ENCODE measurements at regions of chr5 and their contacts with region 1.

Region 1: DNA sequence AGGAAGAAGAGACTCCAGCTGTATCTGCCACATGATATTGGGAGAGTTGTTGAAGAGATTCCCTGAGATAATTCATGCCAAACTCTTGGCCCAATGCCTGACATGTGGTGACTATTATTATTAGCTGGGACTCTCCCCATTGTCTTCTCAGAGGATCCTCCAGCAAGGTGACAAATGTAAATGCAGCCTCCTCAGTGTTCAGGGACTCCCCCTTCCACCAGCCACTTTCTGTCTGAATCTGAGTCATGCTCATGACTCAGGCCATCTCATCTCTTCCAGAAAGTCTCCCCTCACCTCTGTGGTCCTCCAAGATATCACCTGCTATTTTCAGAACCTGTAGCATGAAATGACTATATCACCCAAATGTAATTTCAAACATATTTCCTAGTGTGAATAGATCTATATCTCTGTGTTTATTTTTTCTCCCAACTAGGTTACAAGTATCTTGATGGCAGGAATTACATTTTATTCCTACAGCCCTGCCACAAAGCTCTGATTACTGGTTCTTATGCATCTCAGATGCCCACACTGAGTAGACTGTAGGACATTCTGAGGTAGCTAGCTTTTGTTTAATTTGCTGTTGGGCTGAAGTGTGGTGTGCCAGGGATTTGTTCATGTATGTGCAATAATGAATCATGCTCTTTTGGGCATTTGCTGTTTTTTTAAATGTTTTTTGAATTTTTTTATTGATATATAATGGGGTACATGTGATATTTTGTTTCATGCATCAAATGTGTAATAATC is 126.6 kb upstream of the IL12B start:
- DNase-seq: no peak
- ATAC-seq: peak in 1 of 4 donors; percentile 35
- H3K4me3 ChIP-seq: no peak overlapping the region
- H3K27ac ChIP-seq: no peak overlapping the region
- H3K4me1 ChIP-seq: peaks cover 0 to 12% (median under 1%) of the 10 kb centered on the region in 12 donors
- H3K27me3 ChIP-seq: no peaks in the 10 kb centered on the region
- CTCF ChIP-seq: no peak
- POLR2A ChIP-seq: no peak

Region 2: DNA sequence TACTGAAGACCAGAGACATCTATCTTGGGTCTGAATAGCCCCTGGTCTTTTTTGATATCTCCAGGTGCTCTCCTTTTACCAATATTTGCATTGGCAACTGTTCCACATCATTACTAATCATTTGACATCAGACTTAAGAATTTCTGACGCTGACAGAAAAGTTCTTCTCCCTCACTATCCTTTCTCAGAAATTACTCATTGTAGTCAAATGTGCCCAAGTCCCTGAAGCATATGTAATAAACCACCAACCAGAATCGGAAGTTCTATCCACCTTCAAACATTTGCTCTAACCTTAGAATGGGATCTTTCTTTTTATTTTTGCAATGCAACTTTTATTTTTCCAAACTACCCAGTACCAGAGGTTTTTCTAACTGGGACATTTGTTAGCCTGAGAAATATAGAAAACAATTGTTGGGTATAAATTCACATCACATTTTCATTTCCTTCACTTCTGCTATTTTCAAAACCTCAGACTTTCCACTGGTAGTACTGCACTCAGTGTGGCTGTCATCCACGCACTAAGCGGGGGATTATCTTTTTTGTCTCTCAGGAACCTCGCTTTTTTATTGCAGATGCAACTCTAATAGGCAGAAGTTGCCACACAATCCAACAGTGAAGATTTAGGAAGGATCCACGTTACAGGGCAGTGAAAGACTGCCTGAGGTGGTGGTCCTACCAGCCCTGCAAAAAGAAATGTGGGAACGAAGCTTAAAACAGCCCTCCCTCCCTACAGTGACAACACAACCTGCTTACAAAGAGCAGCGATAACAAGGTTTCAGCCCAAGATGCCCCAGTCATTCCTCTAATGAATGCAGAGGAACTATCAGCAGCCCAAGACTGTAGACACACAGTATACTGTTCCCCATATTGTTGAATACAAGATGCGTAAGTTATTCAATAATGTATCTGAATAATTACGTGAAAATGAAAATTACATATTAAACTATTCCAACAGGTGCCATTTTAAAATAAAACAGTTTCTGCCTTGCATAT is 558.4 kb before region 1 on chr5:
- intact Hi-C with region 1: no loop called
- DNase-seq: no peak
- ATAC-seq: no peak
- H3K4me3 ChIP-seq: no peak overlapping the region
- H3K27ac ChIP-seq: no peak overlapping the region
- H3K4me1 ChIP-seq: peaks cover 0 to 48% (median 15%) of the 10 kb centered on the region in 12 donors
- H3K27me3 ChIP-seq: no peaks in the 10 kb centered on the region
- CTCF ChIP-seq: no peak
- POLR2A ChIP-seq: no peak

Region 3: GRCh38 chr5:159657771-159658170 is 200.9 kb after region 1 on chr5:
- intact Hi-C with region 1: loop called in 1 of 10 experiments (anchors 10 kb)
- DNase-seq: no peak
- ATAC-seq: no peak
- H3K4me3 ChIP-seq: no peak overlapping the region
- H3K27ac ChIP-seq: no peak overlapping the region
- H3K4me1 ChIP-seq: peaks cover 0 to 12% (median 4%) of the 10 kb centered on the region in 12 donors
- H3K27me3 ChIP-seq: no peaks in the 10 kb centered on the region
- CTCF ChIP-seq: no peak
- POLR2A ChIP-seq: no peak